Heart left ventricle (tissue), 16 donors: ENCODE measurements at regions of chr6 and their contacts with region 1.

Region 1: DNA sequence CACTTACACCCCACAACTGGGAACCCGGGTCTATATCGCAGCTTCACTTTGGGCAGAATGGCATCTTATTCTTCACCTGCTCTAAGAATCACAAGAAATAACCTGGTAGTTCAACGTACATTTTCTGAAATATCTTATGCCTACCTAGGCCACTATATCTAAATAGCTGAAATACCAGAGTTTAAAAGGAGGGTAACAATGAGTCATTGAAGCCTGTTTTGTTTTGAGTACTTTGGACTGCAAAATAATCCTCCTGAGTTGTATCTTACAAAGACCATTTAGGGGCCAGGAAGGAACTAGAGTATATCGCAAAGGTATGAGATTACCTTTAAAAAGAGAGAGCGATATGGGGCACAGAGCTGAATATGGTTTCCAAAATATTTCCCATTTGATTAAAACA is 96.7 kb upstream of the NUP153 start:
- DNase-seq: no peak
- ATAC-seq: no peak
- H3K4me3 ChIP-seq: no peak overlapping the region
- H3K27ac ChIP-seq: no peak overlapping the region
- H3K4me1 ChIP-seq: peaks cover 0 to 6% (median 0%) of the 10 kb centered on the region in 12 donors
- H3K27me3 ChIP-seq: no peaks in the 10 kb centered on the region
- CTCF ChIP-seq: no peak
- POLR2A ChIP-seq: no peak

Region 2: DNA sequence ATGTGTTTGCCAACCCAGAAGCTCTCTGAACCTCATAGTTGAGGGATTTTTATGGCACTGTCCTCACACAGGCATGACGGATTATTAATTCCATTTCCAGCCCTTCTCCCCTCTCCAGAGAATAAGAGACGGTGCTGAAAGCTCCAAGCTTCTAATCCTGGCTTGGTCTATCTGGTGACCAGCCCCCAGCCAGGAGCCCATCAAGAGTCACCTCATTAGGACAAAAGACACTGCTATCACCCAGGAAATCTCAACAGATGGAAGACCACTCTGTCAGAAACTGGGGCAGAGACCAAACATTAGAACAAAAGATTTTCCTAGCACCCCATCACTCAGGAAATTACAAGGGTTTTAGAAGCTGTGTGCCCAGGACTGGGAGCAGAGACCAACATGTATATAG is 653.3 kb before region 1 on chr6:
- intact Hi-C with region 1: loop called (anchors 5 to 10 kb)
- DNase-seq: no peak
- ATAC-seq: no peak
- H3K4me3 ChIP-seq: no peak overlapping the region
- H3K27ac ChIP-seq: no peak overlapping the region
- H3K4me1 ChIP-seq: no peaks in the 10 kb centered on the region
- H3K27me3 ChIP-seq: no peaks in the 10 kb centered on the region
- CTCF ChIP-seq: no peak
- POLR2A ChIP-seq: no peak

Region 3: DNA sequence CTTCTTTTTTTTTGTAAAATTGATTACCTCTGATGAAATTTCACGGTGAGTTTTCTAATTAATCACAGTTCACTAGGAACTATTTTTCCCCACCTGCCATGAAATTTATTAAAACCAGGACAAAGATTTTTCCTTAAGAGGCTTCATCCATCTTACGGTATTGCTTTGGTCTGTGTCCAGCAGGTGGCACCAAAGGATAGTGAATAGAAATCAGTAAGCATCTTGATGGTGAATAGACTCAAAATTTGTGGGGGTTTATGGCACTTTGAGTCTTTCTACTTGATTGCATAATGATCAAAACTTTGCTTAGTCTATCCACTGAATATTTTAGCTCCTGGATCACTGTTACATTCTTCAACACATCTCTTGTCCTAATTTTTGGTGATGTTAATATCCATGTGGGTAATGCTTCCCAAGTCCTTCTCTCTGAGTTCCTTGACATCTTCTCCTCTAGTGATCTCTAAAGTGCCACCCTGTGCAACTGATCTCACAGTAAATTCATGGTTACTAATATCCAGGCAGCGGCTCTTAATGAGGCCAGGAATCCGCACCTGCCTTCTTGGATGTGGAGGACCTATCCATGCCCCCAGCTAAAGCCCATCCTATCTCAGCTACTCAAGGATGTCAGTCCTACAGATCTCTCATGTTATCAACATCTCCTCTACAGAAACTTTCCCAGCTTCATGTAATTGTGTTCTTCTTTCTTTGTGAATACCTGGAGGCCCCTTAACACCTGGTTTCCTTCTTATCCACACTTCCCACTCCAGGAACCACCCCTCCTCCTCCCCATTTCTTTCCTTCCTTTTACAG is 647.1 kb before region 1 on chr6:
- intact Hi-C with region 1: loop called (anchors 5 to 10 kb)
- DNase-seq: peak in 4 of 5 donors; percentile 36 to 58 (median 55)
- ATAC-seq: peak in 2 of 4 donors; percentile 42 to 57
- H3K4me3 ChIP-seq: no peak overlapping the region
- H3K27ac ChIP-seq: no peak overlapping the region
- H3K4me1 ChIP-seq: no peaks in the 10 kb centered on the region
- H3K27me3 ChIP-seq: no peaks in the 10 kb centered on the region
- CTCF ChIP-seq: peak; percentile 57 to 90 (median 80)
- POLR2A ChIP-seq: no peak

Region 4: GRCh38 chr6:17589406-17590096 is 213.9 kb before region 1 on chr6:
- intact Hi-C with region 1: loop called in 6 of 10 experiments (anchors 5 to 10 kb)
- DNase-seq: no peak
- ATAC-seq: no peak
- H3K4me3 ChIP-seq: no peak overlapping the region
- H3K27ac ChIP-seq: no peak overlapping the region
- H3K4me1 ChIP-seq: peaks cover 0 to 10% (median under 1%) of the 10 kb centered on the region in 12 donors
- H3K27me3 ChIP-seq: no peaks in the 10 kb centered on the region
- CTCF ChIP-seq: no peak
- POLR2A ChIP-seq: no peak

Region 5: GRCh38 chr6:17640477-17640917 is 162.9 kb before region 1 on chr6:
- intact Hi-C with region 1: no loop called
- DNase-seq: no peak
- ATAC-seq: no peak
- H3K4me3 ChIP-seq: no peak overlapping the region
- H3K27ac ChIP-seq: no peak overlapping the region
- H3K4me1 ChIP-seq: peaks cover 0 to 22% (median 8%) of the 10 kb centered on the region in 12 donors
- H3K27me3 ChIP-seq: no peaks in the 10 kb centered on the region
- CTCF ChIP-seq: no peak
- POLR2A ChIP-seq: no peak

Region 6: GRCh38 chr6:17725083-17725482 is 78.3 kb before region 1 on chr6:
- intact Hi-C with region 1: no loop called
- DNase-seq: peak; percentile 64 to 82 (median 77)
- ATAC-seq: peak; percentile 75 to 98 (median 89)
- H3K4me3 ChIP-seq: no peak overlapping the region
- H3K27ac ChIP-seq: peak overlapping the region in 2 of 12 donors; percentile 11 to 31
- H3K4me1 ChIP-seq: peaks cover 0 to 13% (median 9%) of the 10 kb centered on the region in 12 donors
- H3K27me3 ChIP-seq: no peaks in the 10 kb centered on the region
- CTCF ChIP-seq: no peak
- POLR2A ChIP-seq: no peak

Region 7: DNA sequence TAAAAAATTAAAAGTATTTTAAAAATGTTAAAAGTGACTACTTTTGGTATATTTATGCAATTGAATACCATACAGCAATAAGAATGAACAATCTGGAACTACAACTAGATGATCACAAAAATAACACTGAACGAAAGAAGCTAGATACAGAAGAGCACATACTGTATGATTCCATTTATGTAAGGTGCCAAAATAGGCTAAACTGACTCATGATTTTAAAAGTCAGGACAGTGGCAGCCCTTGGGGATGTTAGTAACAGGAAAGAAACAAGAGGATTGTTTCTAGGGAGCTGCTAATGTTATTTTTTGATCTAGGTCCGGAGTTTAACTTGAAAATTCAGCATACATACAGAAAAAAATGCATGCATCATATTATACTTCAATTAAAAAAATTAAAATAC is 141.7 kb after region 1 on chr6:
- intact Hi-C with region 1: no loop called
- DNase-seq: no peak
- ATAC-seq: peak; percentile 82 to 91 (median 86)
- H3K4me3 ChIP-seq: no peak overlapping the region
- H3K27ac ChIP-seq: peak overlapping the region in 10 of 12 donors; percentile 1 to 73 (median 40)
- H3K4me1 ChIP-seq: peaks cover 0 to 73% (median 29%) of the 10 kb centered on the region in 12 donors
- H3K27me3 ChIP-seq: no peaks in the 10 kb centered on the region
- CTCF ChIP-seq: no peak
- POLR2A ChIP-seq: no peak